Common myeloid progenitor, CD34-positive (primary cell): ENCODE measurements at regions of chr20 and their contacts with region 1.

Region 1: GRCh38 chr20:13771853-13772453 is 12.8 kb downstream of the ESF1 start:
- DNase-seq: peak; percentile 17 to 42 (median 39)
- H3K4me3 ChIP-seq: no peak overlapping the region
- H3K27ac ChIP-seq: no peak overlapping the region
- H3K4me1 ChIP-seq: no peaks in the 10 kb centered on the region
- H3K27me3 ChIP-seq: no peaks in the 10 kb centered on the region

Region 2: DNA sequence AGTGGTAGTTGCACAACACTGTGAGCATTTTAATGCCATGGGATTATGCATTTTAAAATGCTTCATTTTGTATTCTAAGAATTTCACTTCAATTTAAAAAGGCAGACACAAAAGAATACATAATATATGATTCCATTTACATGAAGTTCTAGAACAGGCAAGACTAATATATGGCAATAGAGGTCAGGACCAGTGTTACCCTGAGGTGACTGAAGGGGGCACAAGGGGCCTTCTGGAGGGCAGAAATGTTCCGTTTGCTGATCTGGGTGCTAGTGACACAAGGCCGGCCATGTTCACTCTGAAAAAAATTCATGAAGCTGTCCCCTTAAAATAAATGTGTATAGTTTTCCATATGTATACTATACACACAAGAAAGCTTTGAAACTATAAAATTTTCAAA is 161.8 kb before region 1 on chr20:
- CTCF ChIA-PET with region 1: interaction called, 14 read pairs
- POLR2A ChIA-PET with region 1: no interaction called
- DNase-seq: peak; percentile 14 to 36 (median 20)
- H3K4me3 ChIP-seq: no peak overlapping the region
- H3K27ac ChIP-seq: no peak overlapping the region
- H3K4me1 ChIP-seq: no peaks in the 10 kb centered on the region
- H3K27me3 ChIP-seq: no peaks in the 10 kb centered on the region

Region 3: DNA sequence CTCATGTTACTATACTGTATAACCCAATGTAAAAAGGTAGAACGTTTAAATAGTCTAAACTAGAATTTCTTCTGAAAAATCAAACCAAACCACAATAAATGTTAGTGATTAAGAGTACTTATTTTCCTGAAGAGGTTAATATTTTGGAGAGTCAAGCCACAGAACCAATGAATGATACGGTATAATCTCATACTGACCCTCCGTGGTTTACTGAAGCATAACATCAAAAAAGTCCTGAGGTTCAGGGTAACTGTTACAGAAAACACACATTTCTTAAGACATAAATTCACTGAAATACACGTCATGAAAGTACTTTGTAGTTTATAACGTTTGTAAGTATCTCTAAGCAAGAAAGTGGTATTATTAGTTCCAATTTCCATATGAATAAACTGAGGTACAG is 16.1 kb before region 1 on chr20:
- CTCF ChIA-PET with region 1: interaction called, 13 read pairs
- POLR2A ChIA-PET with region 1: no interaction called
- DNase-seq: no peak
- H3K4me3 ChIP-seq: no peak overlapping the region
- H3K27ac ChIP-seq: no peak overlapping the region
- H3K4me1 ChIP-seq: no peaks in the 10 kb centered on the region
- H3K27me3 ChIP-seq: no peaks in the 10 kb centered on the region

Region 4: DNA sequence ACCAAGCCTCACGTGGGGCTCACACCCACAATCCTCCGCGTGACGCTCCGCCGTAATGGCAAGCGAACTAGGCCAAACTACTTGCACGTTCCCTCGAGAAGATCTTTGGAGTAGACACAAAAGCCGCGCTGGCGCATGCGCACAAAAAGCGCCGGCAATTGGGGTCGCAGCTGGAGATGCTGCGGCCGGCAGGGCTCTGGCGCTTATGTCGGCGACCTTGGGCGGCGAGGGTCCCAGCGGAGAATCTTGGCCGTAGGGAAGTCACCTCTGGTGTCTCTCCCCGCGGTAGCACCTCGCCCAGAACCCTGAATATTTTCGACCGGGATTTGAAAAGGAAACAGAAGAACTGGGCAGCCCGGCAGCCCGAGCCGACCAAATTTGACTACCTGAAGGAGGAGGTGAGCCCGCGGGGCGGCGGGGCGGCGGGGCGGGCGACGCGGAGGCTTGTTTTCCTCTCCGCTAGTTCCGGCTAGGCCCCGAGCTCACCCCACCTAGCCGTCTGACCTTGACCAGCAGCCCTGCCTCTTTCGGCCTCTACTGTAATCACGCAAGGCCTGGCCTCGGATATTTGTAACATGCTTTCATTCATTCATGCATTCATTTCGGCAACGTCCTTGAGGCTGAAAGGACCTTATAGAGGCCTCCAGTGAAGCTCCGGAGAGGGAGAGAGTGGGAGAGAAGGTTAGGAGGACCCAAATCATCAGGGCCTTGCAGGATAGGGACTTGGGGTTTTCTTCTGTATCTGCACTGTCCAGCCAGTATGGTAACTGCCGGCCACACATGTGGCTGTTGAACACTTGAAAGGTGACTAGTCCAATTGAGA is 13.2 kb after region 1 on chr20 and contains the starts of genes ESF1 and NDUFAF5:
- CTCF ChIA-PET with region 1: interaction called, 10 read pairs
- POLR2A ChIA-PET with region 1: interaction called, 3 read pairs
- DNase-seq: peak; percentile 97 to 98 (median 97)
- H3K4me3 ChIP-seq: peak within 1 kb of the TSS; percentile 84 to 99 (median 89)
- H3K27ac ChIP-seq: peak within 1 kb of the TSS; percentile 50 to 90
- H3K4me1 ChIP-seq: peaks cover 16 to 25% (median 21%) of the 10 kb centered on the region in 4 experiments
- H3K27me3 ChIP-seq: no peaks in the 10 kb centered on the region